Ovary (tissue), 10 donors: ENCODE measurements at regions of chr9 and their contacts with region 1.

Region 1: GRCh38 chr9:70352802-70353201 is 61.7 kb downstream of the KLF9 start:
- DNase-seq: no peak
- H3K4me3 ChIP-seq: no peak overlapping the region
- H3K27ac ChIP-seq: no peak overlapping the region
- H3K4me1 ChIP-seq: peaks cover 2% of the 10 kb centered on the region
- H3K27me3 ChIP-seq: peaks cover 2% of the 10 kb centered on the region
- CTCF ChIP-seq: peak in 2 of 3 donors; percentile 32 to 61
- EP300 ChIP-seq: no peak
- POLR2A ChIP-seq: no peak

Region 2: GRCh38 chr9:70406434-70406862 is 53.6 kb after region 1 on chr9:
- intact Hi-C with region 1: loop called in 1 of 4 experiments (anchors 10 kb)
- DNase-seq: peak in 2 of 5 donors; percentile 45 to 49
- H3K4me3 ChIP-seq: peak overlapping the region; percentile 3
- H3K27ac ChIP-seq: peak overlapping the region; percentile 39 to 69
- H3K4me1 ChIP-seq: peaks cover 45% of the 10 kb centered on the region
- H3K27me3 ChIP-seq: no peaks in the 10 kb centered on the region
- CTCF ChIP-seq: no peak
- EP300 ChIP-seq: no peak
- POLR2A ChIP-seq: no peak